ENCODE measurements at regions of chr19 and their contacts with region 1.

Region 1: GRCh38 chr19:15107061-15108010 is at the start of gene SYDE1:
- DNase-seq: no peak
- H3K4me3 ChIP-seq: peak within 1 kb of the TSS; percentile 76 to 99 (median 94)
- H3K27ac ChIP-seq: peak within 1 kb of the TSS; percentile 94 to 96 (median 96)
- H3K4me1 ChIP-seq: peaks cover 11 to 31% (median 24%) of the 10 kb centered on the region in 4 donors
- H3K27me3 ChIP-seq: no peaks in the 10 kb centered on the region
- CTCF ChIP-seq: no peak
- EP300 ChIP-seq: no peak
- POLR2A ChIP-seq: peak; percentile 18
- total RNA-seq, gene SYDE1: 42.8 to 106 (median 77.1) TPM

Region 2: DNA sequence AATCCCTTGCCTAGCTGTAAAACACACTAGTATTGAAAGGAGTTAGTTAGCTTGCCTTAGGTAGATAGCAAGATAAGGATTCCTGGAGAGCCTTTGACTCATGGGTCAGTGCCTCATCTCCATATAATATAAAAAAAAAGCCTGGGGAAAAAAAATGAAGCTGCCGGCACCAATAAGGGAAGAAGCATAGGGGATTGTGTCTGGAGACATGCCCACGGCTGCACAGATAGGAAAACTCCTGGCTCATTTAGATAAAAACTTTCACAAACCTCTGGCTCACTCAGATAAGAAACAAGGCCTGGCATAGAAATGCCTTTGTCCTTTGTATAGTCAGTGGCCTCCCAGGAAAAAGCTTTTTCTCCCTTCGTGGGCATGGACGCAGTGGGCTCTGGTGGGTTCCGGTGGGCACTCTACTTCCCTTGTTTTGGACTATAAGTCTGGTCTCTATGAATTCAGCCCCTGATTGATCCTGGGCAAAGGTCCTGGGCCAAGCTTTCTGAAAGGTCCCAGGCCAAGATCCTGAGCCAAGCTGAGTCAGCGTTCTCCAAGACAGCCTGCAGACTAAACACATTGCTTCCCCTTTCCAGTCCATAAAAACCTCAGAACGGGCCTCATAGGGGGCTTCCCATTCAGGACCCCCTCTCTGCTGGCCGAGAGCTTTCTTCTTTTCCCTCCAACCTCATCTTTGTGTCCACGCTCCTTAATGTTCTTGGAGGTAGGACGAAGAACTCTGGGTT is 216.5 kb before region 1 on chr19:
- intact Hi-C with region 1: no loop called
- DNase-seq: no peak
- H3K4me3 ChIP-seq: no peak overlapping the region
- H3K27ac ChIP-seq: no peak overlapping the region
- H3K4me1 ChIP-seq: peaks cover 0 to 5% (median 0%) of the 10 kb centered on the region in 4 donors
- H3K27me3 ChIP-seq: peaks cover 0 to 17% (median 0%) of the 10 kb centered on the region in 4 donors
- CTCF ChIP-seq: no peak
- EP300 ChIP-seq: no peak
- POLR2A ChIP-seq: no peak

Region 3: GRCh38 chr19:15125232-15126067 is 18.1 kb after region 1 on chr19:
- intact Hi-C with region 1: loop called (anchors 2 kb)
- DNase-seq: peak; percentile 99
- H3K4me3 ChIP-seq: peak overlapping the region; percentile 66 to 95 (median 77)
- H3K27ac ChIP-seq: peak overlapping the region; percentile 85 to 95 (median 94)
- H3K4me1 ChIP-seq: peaks cover 19 to 30% (median 29%) of the 10 kb centered on the region in 4 donors
- H3K27me3 ChIP-seq: no peaks in the 10 kb centered on the region
- CTCF ChIP-seq: peak in 2 of 3 experiments; percentile 9 to 31
- EP300 ChIP-seq: no peak
- POLR2A ChIP-seq: peak; percentile 15